ENCODE measurements at regions of chr3 and their contacts with region 1.

Region 1: GRCh38 chr3:49171119-49171774 is at the start of gene KLHDC8B:
- DNase-seq: peak; percentile 88
- H3K4me3 Mint-ChIP-seq: peak within 1 kb of the TSS; percentile 67
- H3K27ac Mint-ChIP-seq: no peak within 1 kb of the TSS
- H3K4me1 Mint-ChIP-seq: peaks cover 9% of the 10 kb centered on the region
- H3K27me3 Mint-ChIP-seq: no peaks in the 10 kb centered on the region
- total RNA-seq, gene KLHDC8B: 1.8 to 2.4 TPM

Region 2: GRCh38 chr3:49133226-49133951 is 37.9 kb before region 1 on chr3:
- CTCF ChIA-PET with region 1: no interaction called
- intact Hi-C with region 1: no loop called
- DNase-seq: no peak
- H3K4me3 Mint-ChIP-seq: peak overlapping the region; percentile 21
- H3K27ac Mint-ChIP-seq: no peak overlapping the region
- H3K4me1 Mint-ChIP-seq: no peaks in the 10 kb centered on the region
- H3K27me3 Mint-ChIP-seq: peaks cover 20% of the 10 kb centered on the region

Region 3: DNA sequence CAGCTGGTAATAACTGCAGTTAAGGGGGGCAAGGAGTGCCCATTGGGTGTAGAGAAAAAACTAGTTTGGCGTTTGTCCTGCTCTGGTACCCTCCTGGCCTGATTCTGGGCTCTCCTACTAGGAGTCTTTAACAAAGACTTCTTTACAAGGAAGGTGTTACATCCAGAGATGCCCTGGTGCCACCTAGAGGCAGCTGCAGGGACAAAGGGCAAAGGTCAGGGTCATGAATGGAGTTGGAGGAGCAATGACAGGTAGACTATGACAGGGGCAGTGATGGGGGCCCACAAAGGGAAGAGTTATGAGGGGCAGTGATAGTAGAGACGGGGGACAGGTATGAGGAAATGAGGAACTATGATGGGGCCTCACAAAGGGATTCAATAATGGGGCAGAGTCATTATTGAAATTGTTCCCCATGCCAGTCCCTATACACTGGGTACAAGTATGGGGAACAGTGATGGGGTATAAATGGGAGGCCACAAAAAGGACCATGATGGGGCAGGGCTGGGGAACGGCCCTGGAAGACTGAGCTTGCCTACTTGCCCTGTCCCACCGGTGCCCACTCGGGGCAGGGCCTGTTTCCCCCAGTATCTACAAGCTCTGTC is 13.0 kb before region 1 on chr3:
- CTCF ChIA-PET with region 1: interaction called, 28 read pairs
- intact Hi-C with region 1: no loop called
- DNase-seq: peak; percentile 85
- H3K4me3 Mint-ChIP-seq: no peak overlapping the region
- H3K27ac Mint-ChIP-seq: no peak overlapping the region
- H3K4me1 Mint-ChIP-seq: peaks cover 10% of the 10 kb centered on the region
- H3K27me3 Mint-ChIP-seq: no peaks in the 10 kb centered on the region

Region 4: DNA sequence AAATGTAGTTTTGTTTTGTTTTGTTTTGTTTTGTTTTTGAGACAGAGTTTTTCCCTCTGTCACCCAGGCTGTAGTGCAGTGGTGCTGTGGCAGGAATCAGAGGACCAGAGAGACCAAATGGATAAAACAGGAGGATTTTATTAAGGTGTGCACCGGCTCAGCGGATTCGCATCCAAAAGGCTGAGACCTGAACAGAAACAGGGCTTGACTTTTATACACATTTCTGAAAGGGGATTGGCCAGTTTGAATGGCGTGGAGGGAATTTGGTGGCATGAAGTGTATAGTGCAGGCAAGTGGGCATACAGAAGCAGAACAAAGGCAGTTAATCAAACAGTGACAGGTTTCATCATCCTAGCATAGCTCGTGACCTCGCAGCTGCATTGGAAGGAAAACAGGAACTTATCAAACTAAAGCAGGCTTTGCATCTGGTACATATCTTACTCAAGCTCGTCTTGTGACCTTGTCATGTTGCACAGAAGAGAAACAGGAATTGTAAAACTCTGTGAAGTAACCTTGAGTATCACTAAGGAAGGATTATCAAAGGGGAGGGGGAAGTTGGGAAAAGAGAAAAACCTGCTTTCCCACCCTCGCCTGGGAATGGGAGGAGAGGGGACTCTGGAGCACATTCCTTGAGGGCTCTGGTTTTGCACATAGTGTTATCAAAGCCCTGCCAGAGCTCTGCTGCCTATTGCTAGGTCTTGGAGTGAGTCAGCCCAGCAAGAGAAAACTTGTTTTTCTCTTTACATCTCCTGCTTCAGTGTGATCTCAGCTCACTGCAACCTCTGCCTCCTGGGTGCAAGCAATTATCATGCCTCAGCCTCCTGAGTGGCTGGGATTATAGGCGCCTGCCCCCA is 67.3 kb after region 1 on chr3:
- CTCF ChIA-PET with region 1: no interaction called
- intact Hi-C with region 1: loop called (anchors 5 kb)
- DNase-seq: peak; percentile 26
- H3K4me3 Mint-ChIP-seq: no peak overlapping the region
- H3K27ac Mint-ChIP-seq: peak overlapping the region; percentile 66
- H3K4me1 Mint-ChIP-seq: peaks cover 7% of the 10 kb centered on the region
- H3K27me3 Mint-ChIP-seq: no peaks in the 10 kb centered on the region

Region 5: DNA sequence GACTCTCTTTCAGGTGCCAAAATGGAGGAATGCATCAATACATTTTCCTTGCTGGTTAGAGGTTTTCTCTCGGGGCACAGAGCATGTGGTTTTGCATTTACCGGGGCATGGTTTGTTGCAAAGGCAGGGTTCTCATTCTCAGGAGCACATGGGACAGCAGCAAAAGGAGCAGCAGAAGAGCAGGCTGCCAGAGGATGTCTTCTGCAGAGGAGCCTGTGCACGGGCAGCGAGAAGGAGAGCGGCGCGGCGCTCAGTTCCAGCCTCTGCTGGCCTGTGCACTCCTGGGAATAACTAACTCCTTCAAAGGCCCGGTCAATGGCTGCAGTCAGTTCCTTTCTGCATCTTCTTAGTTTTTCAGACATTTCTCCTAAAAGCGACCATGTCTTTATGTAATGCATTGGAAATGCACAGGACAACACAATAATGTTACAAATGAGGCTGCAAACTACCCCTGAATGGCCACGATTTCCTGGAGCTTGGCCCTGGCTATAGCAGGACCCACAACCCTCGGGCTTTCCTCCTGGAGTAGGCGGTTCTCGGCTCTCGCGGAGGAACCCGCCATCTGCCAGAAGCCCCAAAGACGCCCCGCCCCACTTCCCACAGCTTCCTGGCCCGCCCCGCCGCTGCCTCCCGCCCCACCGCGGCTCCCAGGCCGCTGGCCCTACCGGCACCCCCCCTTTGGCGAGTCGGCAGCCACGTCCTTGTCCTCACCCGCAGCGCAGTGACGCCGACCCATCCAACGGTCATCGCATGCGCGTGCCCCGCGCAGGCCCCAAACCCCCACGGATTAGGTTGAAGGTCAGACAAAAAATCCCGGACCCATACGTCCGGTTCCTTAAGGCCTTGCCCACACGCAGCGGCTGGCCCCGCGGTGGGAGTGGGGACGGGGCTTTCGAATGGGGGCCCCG is 105.5 kb after region 1 on chr3 and contains the start of gene C3orf62:
- CTCF ChIA-PET with region 1: interaction called, 4 read pairs
- intact Hi-C with region 1: loop called (anchors 2 kb)
- DNase-seq: peak; percentile 89
- H3K4me3 Mint-ChIP-seq: peak within 1 kb of the TSS; percentile 75
- H3K27ac Mint-ChIP-seq: peak within 1 kb of the TSS; percentile 82
- H3K4me1 Mint-ChIP-seq: peaks cover 33% of the 10 kb centered on the region
- H3K27me3 Mint-ChIP-seq: no peaks in the 10 kb centered on the region
- total RNA-seq, gene C3orf62: 1.7 TPM

Region 6: DNA sequence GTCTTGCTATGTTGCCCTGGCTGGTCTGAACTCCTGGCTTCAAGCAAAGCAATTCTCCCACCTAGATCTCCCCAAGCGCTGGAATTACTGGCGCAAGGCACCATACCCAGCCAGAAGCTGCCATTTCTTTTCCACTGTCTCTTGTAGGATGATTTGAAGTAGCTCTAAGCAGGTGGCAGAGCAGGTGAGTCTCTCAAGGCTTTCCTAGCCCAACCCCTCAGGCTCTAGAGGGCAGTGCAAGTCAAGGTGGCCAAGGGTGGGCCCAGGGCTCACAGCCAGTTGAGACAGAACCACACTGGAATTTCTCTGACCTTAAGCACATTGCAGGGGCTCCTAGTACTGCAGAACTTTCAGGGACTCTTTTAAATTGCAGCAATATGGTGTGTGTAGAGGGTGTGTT is 283.2 kb after region 1 on chr3:
- CTCF ChIA-PET with region 1: interaction called, 4 read pairs
- intact Hi-C with region 1: loop called (anchors 1 kb)
- DNase-seq: peak; percentile 30
- H3K4me3 Mint-ChIP-seq: no peak overlapping the region
- H3K27ac Mint-ChIP-seq: no peak overlapping the region
- H3K4me1 Mint-ChIP-seq: no peaks in the 10 kb centered on the region
- H3K27me3 Mint-ChIP-seq: no peaks in the 10 kb centered on the region

Region 7: GRCh38 chr3:49469936-49470713 is 298.9 kb after region 1 on chr3 and contains the start of gene DAG1:
- CTCF ChIA-PET with region 1: no interaction called
- intact Hi-C with region 1: loop called (anchors 1 kb)
- DNase-seq: peak; percentile 97
- H3K4me3 Mint-ChIP-seq: peak within 1 kb of the TSS; percentile 83
- H3K27ac Mint-ChIP-seq: peak within 1 kb of the TSS; percentile 85
- H3K4me1 Mint-ChIP-seq: peaks cover 14% of the 10 kb centered on the region
- H3K27me3 Mint-ChIP-seq: no peaks in the 10 kb centered on the region
- total RNA-seq, gene DAG1: 6.9 to 8.2 TPM

Measured in activated naive CD4-positive, alpha-beta T cell treated with anti-CD3 and anti-CD28 coated beads for 36 hours (primary cell).